ENCODE measurements at regions of chr14 and their contacts with region 1.

Region 1: DNA sequence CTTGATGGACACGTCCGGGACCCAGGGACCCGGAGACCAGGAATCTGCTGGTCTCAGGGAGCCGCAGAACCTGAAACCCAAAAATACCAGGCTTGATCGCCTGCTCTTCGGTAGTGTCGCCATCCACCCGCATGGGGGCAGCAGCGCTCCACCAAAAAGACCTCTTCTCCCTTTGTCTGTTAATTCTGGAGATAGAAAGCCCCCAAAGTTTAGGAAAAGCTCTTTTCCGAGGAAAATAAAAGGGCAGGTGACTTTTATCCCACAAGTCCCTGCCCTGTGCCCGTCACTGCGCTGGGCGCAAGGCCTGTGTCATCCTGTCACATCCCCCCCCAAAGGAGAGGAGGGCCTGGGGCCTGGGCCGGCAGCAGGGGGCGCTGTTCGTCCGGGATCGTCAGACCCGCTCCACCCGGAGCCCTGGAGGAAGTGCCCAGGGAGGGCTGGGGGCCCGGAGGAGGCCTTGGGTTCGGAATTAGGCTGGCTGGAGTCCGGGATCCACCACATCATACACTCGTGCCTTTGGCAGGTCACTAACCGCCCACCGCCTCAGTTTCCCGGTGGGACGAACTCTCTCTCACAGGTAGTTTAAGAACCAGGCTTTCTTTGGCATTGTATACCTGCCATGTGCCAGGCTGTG is 31.9 kb downstream of the DAD1 start:
- DNase-seq: peak; percentile 90
- H3K4me3 ChIP-seq: peak overlapping the region; percentile 21 to 46 (median 34)
- H3K27ac ChIP-seq: peak overlapping the region; percentile 50 to 71 (median 62)
- H3K4me1 ChIP-seq: peaks cover 0 to 25% (median 15%) of the 10 kb centered on the region in 4 donors
- H3K27me3 ChIP-seq: no peaks in the 10 kb centered on the region
- CTCF ChIP-seq: peak; percentile 98 to 100 (median 100)
- EP300 ChIP-seq: no peak
- POLR2A ChIP-seq: no peak

Region 2: DNA sequence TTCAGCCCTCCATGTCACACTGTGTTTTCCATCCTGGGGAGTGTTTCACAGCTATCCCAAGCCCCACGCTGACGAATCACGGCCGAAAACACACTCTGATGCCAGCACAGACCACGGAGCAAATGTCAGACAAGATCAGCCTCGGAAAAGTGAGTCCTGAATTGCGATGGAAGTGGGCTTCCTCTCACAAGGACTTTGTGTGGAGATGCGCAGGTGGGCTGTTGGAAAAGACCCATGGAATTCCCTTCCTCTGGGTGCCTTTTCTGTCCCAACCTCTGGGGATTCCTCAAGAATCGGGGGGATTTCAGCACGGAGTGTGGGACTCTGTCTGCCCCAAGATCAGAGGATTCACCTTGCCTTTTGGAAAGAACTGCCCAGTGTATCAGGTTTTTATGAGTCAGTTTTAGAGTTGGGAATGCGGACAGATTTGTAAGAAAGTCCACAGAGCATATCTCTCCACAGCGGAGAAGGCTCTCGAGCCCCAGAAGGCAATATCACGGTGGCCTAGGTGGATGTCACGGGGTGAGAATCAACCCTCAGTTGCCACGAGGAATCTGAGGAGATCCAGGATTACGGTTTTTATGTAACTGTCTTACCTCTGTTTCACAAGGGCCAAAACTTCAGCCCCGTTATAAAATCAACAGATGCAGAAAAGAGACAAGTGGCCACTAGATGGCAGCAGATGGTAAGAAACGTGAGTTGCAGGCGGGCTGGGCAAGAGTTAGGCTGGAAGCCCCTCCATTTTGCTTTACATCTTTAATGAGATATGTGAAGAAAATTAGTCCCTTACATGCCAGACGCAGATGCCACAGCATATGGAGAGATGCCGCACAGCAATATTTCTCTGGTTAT is 170.0 kb before region 1 on chr14:
- intact Hi-C with region 1: loop called (anchors 5 kb)
- DNase-seq: peak; percentile 85
- H3K4me3 ChIP-seq: no peak overlapping the region
- H3K27ac ChIP-seq: no peak overlapping the region
- H3K4me1 ChIP-seq: peaks cover 0 to 9% (median 2%) of the 10 kb centered on the region in 4 donors
- H3K27me3 ChIP-seq: peaks cover 0 to 9% (median 0%) of the 10 kb centered on the region in 3 donors
- CTCF ChIP-seq: peak; percentile 58 to 82 (median 75)
- EP300 ChIP-seq: no peak
- POLR2A ChIP-seq: no peak

Region 3: DNA sequence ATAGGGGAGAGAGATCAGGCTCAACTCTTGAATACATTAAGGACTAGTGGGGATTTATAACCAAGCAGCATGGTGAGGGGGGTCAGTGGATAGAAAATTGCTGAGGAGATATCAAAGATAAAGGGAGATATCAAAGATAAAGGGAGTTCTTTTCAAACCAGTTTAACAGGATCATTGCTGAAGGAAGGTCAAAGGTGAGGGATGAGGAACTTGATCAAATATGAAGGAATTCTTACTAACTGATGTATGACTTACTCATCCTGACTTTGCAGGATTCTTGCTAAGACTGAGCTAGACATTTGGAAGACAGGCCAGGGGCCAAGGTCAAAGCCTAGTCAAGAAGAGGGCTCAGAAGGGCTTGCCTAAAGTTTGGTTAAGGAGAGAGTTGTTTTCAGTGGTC is 45.7 kb after region 1 on chr14:
- intact Hi-C with region 1: no loop called
- DNase-seq: no peak
- H3K4me3 ChIP-seq: no peak overlapping the region
- H3K27ac ChIP-seq: no peak overlapping the region
- H3K4me1 ChIP-seq: peaks cover 0 to 21% (median 16%) of the 10 kb centered on the region in 4 donors
- H3K27me3 ChIP-seq: no peaks in the 10 kb centered on the region
- CTCF ChIP-seq: no peak
- EP300 ChIP-seq: no peak
- POLR2A ChIP-seq: no peak

Region 4: GRCh38 chr14:22653012-22653621 is 96.0 kb after region 1 on chr14:
- intact Hi-C with region 1: loop called (anchors 1 kb)
- DNase-seq: peak; percentile 72
- H3K4me3 ChIP-seq: no peak overlapping the region
- H3K27ac ChIP-seq: no peak overlapping the region
- H3K4me1 ChIP-seq: peaks cover 0 to 9% (median 4%) of the 10 kb centered on the region in 4 donors
- H3K27me3 ChIP-seq: no peaks in the 10 kb centered on the region
- CTCF ChIP-seq: peak; percentile 56 to 82 (median 72)
- EP300 ChIP-seq: no peak
- POLR2A ChIP-seq: no peak

Region 5: GRCh38 chr14:22715186-22715812 is 158.2 kb after region 1 on chr14:
- intact Hi-C with region 1: loop called (anchors 10 kb)
- DNase-seq: no peak
- H3K4me3 ChIP-seq: no peak overlapping the region
- H3K27ac ChIP-seq: no peak overlapping the region
- H3K4me1 ChIP-seq: no peaks in the 10 kb centered on the region
- H3K27me3 ChIP-seq: no peaks in the 10 kb centered on the region
- CTCF ChIP-seq: no peak
- EP300 ChIP-seq: no peak
- POLR2A ChIP-seq: no peak

Region 6: GRCh38 chr14:22822571-22823098 is 265.5 kb after region 1 on chr14:
- intact Hi-C with region 1: loop called (anchors 5 kb)
- DNase-seq: peak; percentile 90
- H3K4me3 ChIP-seq: peak overlapping the region; percentile 22 to 59 (median 46)
- H3K27ac ChIP-seq: peak overlapping the region; percentile 53 to 77 (median 62)
- H3K4me1 ChIP-seq: peaks cover 0 to 36% (median 29%) of the 10 kb centered on the region in 4 donors
- H3K27me3 ChIP-seq: no peaks in the 10 kb centered on the region
- CTCF ChIP-seq: peak; percentile 64 to 89 (median 80)
- EP300 ChIP-seq: no peak
- POLR2A ChIP-seq: no peak

Region 7: GRCh38 chr14:22986508-22987054 is 429.5 kb after region 1 on chr14:
- intact Hi-C with region 1: loop called (anchors 10 kb)
- DNase-seq: peak; percentile 94
- H3K4me3 ChIP-seq: no peak overlapping the region
- H3K27ac ChIP-seq: no peak overlapping the region
- H3K4me1 ChIP-seq: peaks cover 0 to 17% (median 5%) of the 10 kb centered on the region in 4 donors
- H3K27me3 ChIP-seq: peaks cover 0 to 1% (median 0%) of the 10 kb centered on the region in 3 donors
- CTCF ChIP-seq: peak; percentile 67 to 91 (median 90)
- EP300 ChIP-seq: no peak
- POLR2A ChIP-seq: no peak

Region 8: DNA sequence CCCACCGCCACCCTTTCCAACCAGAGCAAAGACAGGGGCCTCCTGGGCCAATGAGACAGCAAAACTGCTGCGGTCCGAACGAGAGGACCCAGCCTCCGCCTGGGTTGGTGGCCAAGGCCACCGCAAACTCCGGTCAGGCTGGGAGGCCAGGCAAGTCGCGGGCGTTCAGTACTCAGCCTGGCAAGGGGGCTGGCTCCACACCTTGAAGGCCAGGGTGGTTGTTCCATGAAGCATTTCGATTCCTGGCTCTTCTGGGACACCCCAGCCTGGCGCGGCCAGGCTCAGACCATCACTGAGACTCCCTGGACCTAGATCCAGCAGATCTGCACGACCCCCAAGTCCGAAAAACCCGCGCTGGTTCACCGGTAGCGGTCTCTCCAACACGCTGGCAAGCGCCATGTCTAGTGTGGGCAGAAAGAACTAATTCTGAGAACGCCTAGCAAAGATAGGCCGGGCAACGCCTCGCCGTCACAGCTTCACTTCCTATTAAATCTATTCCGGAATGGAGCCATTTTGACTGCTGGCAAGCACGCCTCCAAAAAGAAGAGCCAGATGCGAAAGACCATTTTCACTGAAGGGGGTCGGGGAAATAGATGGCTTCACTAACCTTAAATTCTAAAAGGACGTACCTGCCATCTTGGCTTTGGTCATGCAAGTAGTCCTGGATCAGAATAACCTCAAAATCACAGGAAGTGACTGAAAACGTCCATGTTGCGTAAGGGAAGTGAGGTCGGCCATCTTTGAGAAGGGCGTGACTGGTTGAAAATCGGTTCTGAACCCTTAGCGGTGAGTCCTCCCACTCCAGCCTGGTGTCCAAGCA is 477.6 kb after region 1 on chr14 and contains the start of gene PSMB5:
- intact Hi-C with region 1: no loop called
- DNase-seq: peak; percentile 96
- H3K4me3 ChIP-seq: peak within 1 kb of the TSS; percentile 59 to 94 (median 80)
- H3K27ac ChIP-seq: peak within 1 kb of the TSS; percentile 88 to 97 (median 93)
- H3K4me1 ChIP-seq: peaks cover 0 to 14% (median 13%) of the 10 kb centered on the region in 4 donors
- H3K27me3 ChIP-seq: no peaks in the 10 kb centered on the region
- CTCF ChIP-seq: peak in 2 of 4 experiments; percentile 20 to 43
- EP300 ChIP-seq: no peak
- POLR2A ChIP-seq: peak in 1 of 2 donors; percentile 36
- total RNA-seq, gene PSMB5: 113 to 179 (median 135) TPM